Activated naive CD4-positive, alpha-beta T cell treated with anti-CD3 and anti-CD28 coated beads for 36 hours (primary cell): ENCODE measurements at regions of chr5 and their contacts with region 1.

Region 1: DNA sequence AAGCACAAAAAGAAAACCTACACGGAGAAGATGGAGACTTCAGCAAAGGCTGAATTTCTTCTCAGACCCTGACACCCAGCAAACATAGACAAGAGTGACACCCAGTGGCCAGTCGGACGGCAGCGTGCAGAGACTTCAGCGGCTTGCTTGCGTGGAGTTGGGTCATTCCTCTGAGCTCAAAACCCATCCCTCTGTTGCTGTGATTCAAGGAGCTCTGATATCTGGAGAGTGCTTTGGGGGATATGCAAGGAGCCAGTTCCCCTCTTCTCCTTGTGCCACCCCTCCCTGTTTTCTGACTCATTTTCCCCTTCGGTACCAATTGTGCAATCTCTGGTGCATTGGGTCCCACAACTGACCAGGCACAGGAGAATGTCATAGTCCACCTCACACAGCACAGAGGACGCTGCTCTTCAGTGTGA is 27.5 kb downstream of the SH3TC2 start:
- DNase-seq: peak; percentile 89
- H3K4me3 Mint-ChIP-seq: no peak overlapping the region
- H3K27ac Mint-ChIP-seq: no peak overlapping the region
- H3K4me1 Mint-ChIP-seq: peaks cover 24% of the 10 kb centered on the region
- H3K27me3 Mint-ChIP-seq: no peaks in the 10 kb centered on the region

Region 2: GRCh38 chr5:148443998-148444397 is 591.4 kb before region 1 on chr5:
- CTCF ChIA-PET with region 1: interaction called, 4 read pairs
- intact Hi-C with region 1: loop called (anchors 5 kb)
- DNase-seq: peak; percentile 67
- H3K4me3 Mint-ChIP-seq: no peak overlapping the region
- H3K27ac Mint-ChIP-seq: no peak overlapping the region
- H3K4me1 Mint-ChIP-seq: no peaks in the 10 kb centered on the region
- H3K27me3 Mint-ChIP-seq: no peaks in the 10 kb centered on the region

Region 3: GRCh38 chr5:148912714-148913398 is 122.5 kb before region 1 on chr5:
- CTCF ChIA-PET with region 1: no interaction called
- intact Hi-C with region 1: loop called (anchors 2 kb)
- DNase-seq: no peak
- H3K4me3 Mint-ChIP-seq: no peak overlapping the region
- H3K27ac Mint-ChIP-seq: no peak overlapping the region
- H3K4me1 Mint-ChIP-seq: no peaks in the 10 kb centered on the region
- H3K27me3 Mint-ChIP-seq: peaks cover 10% of the 10 kb centered on the region

Region 4: GRCh38 chr5:149018909-149019443 is 16.4 kb before region 1 on chr5:
- CTCF ChIA-PET with region 1: interaction called, 10 read pairs
- intact Hi-C with region 1: loop called (anchors 1 kb)
- DNase-seq: peak; percentile 36
- H3K4me3 Mint-ChIP-seq: no peak overlapping the region
- H3K27ac Mint-ChIP-seq: peak overlapping the region; percentile 26
- H3K4me1 Mint-ChIP-seq: peaks cover 15% of the 10 kb centered on the region
- H3K27me3 Mint-ChIP-seq: peaks cover 9% of the 10 kb centered on the region

Region 5: DNA sequence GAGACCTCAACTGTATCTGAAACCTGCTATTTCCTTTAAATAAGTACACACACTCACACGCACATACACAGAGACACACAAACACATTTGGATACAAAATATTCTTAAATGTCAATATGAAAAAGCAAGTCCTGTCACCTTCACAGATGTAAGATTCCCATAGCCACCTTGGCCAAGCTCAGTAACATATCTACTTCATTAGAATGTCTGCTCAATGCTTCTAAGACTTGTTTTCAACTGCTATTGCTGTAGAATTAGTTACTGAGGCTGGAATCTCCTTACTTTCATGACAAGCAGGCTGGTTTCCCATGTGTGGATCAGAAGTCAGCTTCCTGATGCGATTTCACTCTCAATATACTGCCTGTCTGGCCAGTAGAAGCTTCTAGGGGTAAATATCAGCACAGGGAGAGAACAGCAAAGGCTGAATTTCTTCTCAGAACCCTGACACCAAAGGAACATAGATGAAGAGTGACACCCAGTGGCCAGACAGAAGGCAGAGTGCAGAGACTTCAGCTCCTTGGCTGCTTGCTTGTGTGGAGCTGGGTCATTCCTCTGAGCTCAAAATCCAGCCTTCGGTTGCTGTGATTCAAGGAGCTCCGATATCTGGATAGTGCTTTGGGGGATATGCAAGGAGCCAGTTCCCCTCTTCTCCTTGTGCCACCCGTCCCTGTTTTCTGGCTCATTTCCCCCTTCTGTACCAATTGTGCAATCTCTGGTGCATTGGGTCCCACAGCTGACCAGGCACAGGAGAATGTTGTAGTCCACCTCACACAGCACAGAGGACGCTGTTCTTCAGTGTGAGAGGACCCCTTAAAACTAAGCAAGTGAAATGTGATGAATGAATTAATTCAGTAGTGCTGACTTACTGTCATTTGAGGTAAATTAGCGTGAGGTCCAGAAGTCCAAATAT is 79.3 kb after region 1 on chr5:
- CTCF ChIA-PET with region 1: interaction called, 24 read pairs
- intact Hi-C with region 1: loop called (anchors 1 kb)
- DNase-seq: peak; percentile 67
- H3K4me3 Mint-ChIP-seq: no peak overlapping the region
- H3K27ac Mint-ChIP-seq: no peak overlapping the region
- H3K4me1 Mint-ChIP-seq: no peaks in the 10 kb centered on the region
- H3K27me3 Mint-ChIP-seq: peaks cover 4% of the 10 kb centered on the region